ENCODE measurements at regions of chr17 and their contacts with region 1.

Region 1: DNA sequence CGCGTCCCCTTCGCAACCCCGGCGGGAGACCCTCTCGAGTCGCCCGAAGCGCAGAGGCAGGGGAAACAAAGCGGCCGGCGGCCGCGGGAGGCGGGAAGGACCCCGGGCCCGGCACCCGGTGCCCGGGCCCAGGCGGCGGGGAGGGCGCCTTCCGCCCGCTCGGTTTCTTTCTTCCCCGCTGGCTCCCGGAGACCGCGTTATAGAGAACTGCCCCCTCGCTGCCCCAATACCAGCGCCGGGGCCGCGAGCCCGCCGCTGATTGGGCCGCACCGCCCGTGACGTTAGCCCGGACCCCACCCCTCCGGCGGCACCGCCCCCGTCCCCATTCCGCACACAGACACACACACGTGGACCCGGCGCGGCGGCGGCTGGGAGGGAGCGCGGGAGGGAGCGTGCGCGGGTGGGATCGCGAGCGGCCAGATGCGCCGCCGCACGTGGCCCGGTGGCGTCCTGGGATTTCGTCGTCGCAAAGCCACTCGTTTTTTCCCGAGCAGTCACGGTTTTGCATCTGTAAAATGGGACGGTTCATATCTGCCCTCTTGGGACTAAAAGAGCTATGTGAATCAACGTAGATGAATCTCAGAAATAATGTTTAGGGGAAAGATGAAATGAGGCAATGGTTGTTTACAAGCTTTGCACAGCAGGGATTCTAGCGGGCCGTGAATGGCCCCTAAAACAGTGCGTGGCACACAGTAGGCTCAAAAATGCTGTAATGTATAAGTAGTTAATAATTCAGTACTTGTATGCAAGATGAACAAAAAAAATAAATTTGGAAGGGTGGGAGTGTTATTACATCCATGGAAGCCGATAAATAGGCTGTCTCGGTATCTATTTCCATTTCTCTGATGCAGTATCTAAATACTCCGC is at the start of gene EPOP:
- DNase-seq: peak; percentile 94
- CTCF ChIP-seq: no peak

Region 2: DNA sequence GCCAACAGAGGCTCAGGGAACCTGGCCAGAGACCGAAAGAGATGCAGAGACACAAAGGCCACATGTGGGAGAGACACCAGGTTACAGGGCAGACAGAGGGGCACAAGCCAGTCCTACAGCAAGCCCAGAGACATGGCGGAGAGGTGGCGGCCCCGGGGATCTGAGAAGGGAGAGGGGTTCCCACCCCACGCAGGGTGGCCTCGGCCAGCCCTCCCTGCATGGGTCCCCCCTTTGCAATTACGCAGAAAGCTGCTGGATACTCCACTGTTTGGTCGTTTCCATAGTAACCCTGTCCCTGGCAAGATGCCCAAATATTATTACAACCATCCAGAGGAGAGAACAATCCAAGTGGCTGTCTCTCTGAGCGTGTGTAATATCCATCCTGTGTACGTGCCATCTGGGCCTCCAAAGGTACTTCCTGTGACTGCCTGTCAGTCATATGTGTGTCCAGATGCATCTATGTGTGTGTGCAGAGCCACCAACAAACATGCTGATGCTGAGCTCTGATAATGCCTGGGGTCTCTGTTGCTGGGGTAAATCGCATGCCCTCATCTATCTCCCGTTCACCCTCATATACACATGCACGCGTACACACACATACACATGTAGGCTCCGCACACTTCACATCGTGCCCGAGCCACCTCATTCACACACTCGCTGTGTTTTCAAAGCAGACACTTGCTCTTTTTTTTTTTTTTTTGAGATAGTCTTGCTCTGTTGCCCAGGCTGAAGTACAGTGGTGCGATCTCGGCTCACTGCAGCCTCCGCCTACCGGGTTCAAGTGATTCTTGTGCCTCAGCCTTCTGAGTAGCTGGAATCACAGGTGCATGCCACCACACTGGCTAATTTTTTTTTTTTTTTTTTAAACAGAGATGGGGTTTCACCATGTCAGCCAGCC is 67.7 kb after region 1 on chr17:
- in situ Hi-C with region 1: loop called (anchors 5 kb)
- DNase-seq: no peak
- CTCF ChIP-seq: no peak

Measured in GM13976 (cell line).